Activated naive CD4-positive, alpha-beta T cell treated with anti-CD3 and anti-CD28 coated beads for 36 hours (primary cell): ENCODE measurements at regions of chr1 and their contacts with region 1.

Region 1: DNA sequence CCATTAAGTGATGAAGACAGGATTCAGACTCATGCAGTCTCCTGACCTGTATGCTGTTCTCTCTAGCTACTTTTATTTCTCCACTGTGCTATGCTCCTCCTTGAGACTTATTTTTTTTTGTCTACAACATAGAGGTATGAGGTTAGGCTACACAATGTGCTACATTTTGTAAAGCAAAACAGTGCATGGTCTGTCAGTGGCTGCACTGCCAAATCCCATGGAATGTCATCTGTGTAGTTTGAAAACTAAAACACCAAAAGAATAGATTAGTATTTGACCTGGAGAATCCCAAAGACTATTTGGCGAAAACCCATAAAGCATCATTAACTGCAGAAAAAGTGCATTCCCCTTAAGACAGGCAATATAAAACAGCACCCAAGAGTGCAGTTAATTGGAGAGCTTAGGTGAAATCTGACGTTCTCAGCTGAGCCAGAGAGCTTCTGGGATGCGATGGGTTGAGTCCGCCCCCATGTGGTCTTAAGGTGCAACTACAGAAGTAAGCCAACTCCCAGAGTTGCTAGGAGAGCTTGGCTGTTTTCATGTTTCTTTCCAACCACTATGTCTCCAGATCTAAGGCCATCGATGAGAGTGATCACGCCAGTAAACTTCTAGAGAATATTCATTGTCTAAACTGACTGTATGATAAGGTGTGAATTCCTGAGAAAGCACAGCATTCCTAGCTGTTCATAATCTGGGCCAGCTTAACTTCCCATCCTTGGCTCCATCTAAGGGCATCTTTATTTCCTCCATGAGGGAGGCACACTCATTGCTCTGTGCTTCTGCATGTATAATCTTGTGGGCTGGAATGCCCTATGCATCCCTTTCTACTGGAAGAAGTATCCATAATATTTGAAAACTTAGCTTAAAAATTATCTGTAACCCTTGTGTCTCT is 20.7 kb upstream of the CYP2J2 start:
- DNase-seq: peak; percentile 68
- H3K4me3 Mint-ChIP-seq: no peak overlapping the region
- H3K27ac Mint-ChIP-seq: no peak overlapping the region
- H3K4me1 Mint-ChIP-seq: no peaks in the 10 kb centered on the region
- H3K27me3 Mint-ChIP-seq: no peaks in the 10 kb centered on the region

Region 2: GRCh38 chr1:58739856-58740466 is 1207.3 kb before region 1 on chr1:
- CTCF ChIA-PET with region 1: interaction called, 3 read pairs
- intact Hi-C with region 1: loop called (anchors 1 kb)
- DNase-seq: peak; percentile 15
- H3K4me3 Mint-ChIP-seq: no peak overlapping the region
- H3K27ac Mint-ChIP-seq: no peak overlapping the region
- H3K4me1 Mint-ChIP-seq: no peaks in the 10 kb centered on the region
- H3K27me3 Mint-ChIP-seq: no peaks in the 10 kb centered on the region

Region 3: DNA sequence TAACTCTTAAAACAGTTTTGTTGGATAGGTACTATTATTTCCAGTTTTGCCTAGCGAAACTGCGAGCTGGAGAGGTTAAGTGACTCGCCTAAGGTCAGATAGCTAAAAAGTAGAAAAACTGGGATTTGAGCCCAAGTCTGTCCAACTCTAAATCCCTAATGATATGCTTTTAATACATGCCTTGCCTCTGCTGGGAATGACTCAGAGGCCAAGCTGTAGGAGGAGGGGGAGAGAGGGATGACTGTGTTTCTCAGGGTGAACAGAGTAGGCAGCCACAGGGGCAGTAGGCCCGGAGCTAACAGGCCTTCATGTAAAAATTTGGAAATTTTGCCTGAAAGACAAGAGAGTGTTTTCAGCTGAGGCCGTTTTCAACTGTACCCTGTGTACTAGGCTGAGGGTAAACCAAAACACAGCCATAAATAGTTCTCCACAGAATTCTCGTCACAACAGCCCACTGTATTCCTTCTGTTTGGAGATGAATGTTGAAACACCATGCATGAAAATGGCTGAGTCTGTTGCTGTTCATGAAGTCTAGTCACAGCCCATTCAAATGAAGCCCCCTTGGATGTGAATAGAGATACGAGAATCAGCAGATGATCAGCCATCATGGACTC is 240.0 kb before region 1 on chr1:
- CTCF ChIA-PET with region 1: no interaction called
- intact Hi-C with region 1: no loop called
- DNase-seq: no peak
- H3K4me3 Mint-ChIP-seq: no peak overlapping the region
- H3K27ac Mint-ChIP-seq: no peak overlapping the region
- H3K4me1 Mint-ChIP-seq: no peaks in the 10 kb centered on the region
- H3K27me3 Mint-ChIP-seq: no peaks in the 10 kb centered on the region

Region 4: GRCh38 chr1:59759156-59759925 is 188.0 kb before region 1 on chr1:
- CTCF ChIA-PET with region 1: interaction called, 5 read pairs
- intact Hi-C with region 1: loop called (anchors 1 kb)
- DNase-seq: peak; percentile 83
- H3K4me3 Mint-ChIP-seq: peak overlapping the region; percentile 47
- H3K27ac Mint-ChIP-seq: peak overlapping the region; percentile 53
- H3K4me1 Mint-ChIP-seq: peaks cover 4% of the 10 kb centered on the region
- H3K27me3 Mint-ChIP-seq: no peaks in the 10 kb centered on the region

Region 5: GRCh38 chr1:59885160-59885832 is 62.0 kb before region 1 on chr1:
- CTCF ChIA-PET with region 1: interaction called, 95 read pairs
- intact Hi-C with region 1: no loop called
- DNase-seq: no peak
- H3K4me3 Mint-ChIP-seq: no peak overlapping the region
- H3K27ac Mint-ChIP-seq: no peak overlapping the region
- H3K4me1 Mint-ChIP-seq: no peaks in the 10 kb centered on the region
- H3K27me3 Mint-ChIP-seq: no peaks in the 10 kb centered on the region

Region 6: DNA sequence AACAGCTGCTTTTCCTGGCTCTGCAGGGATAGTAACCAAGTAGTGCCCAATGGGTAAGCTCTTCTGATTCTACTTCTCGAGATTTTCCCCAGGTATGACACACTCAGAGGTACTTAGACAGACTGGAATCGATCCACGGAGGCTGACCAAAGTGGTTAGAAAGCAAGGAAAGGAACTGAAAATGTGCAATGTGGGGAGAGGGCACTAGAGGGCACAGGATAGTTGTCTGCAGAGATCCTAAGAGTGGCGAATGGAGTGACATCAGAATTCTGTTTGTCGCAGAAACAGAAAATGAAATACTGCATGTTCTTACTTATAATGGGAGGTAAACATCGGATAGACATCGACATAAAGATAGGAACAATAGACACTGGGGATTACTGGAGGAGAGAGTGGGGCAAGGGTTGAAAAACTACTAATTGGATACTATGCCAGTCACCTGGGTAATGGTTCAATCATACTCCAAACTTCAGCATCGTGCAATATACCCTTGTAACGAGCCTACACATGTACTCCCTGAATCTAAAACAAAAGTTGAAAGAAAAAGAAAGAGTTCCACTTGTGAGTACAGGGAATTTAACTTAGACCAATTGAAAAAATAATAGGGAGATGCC is 44.0 kb before region 1 on chr1:
- CTCF ChIA-PET with region 1: interaction called, 26 read pairs
- intact Hi-C with region 1: loop called (anchors 1 kb)
- DNase-seq: peak; percentile 51
- H3K4me3 Mint-ChIP-seq: no peak overlapping the region
- H3K27ac Mint-ChIP-seq: no peak overlapping the region
- H3K4me1 Mint-ChIP-seq: no peaks in the 10 kb centered on the region
- H3K27me3 Mint-ChIP-seq: no peaks in the 10 kb centered on the region